A673 (cell line): ENCODE measurements at regions of chr21 and their contacts with region 1.

Region 1: GRCh38 chr21:28745131-28746016 is 247.3 kb downstream of the LTN1 start:
- DNase-seq: peak; percentile 80
- H3K4me3 ChIP-seq: peak overlapping the region; percentile 41
- H3K27ac ChIP-seq: no peak overlapping the region
- H3K4me1 ChIP-seq: no peaks in the 10 kb centered on the region
- H3K27me3 ChIP-seq: no peaks in the 10 kb centered on the region
- CTCF ChIP-seq: peak; percentile 88

Region 2: DNA sequence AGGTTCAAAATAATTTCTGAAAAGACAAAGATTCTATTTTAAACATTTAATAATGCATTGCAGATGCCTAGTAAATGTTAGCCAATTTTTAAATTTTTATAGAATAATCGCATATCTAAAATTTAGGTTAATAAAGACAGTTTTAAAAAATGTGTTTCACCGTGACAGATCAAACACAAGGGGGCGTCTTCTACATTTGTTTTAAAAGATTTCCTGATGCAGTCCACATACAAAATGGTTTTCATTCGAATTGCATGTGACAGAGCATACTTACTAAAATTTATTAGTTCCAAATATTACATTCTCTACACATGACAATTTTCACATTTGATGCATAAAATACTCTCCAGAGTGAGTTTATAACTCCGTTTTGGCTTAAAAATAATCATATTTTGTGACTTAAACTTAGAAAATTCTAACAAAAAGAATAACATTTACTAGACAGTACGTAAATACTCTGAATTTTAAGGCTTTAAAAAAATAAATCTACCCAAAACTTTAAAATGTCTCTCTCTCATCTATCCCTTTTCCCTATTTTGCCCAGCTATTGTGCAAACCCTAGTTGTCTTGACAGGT is 1975.7 kb before region 1 on chr21:
- CTCF ChIA-PET with region 1: no interaction called
- POLR2A ChIA-PET with region 1: no interaction called
- intact Hi-C with region 1: loop called (anchors 10 kb)
- DNase-seq: peak; percentile 57
- H3K4me3 ChIP-seq: no peak overlapping the region
- H3K27ac ChIP-seq: no peak overlapping the region
- H3K4me1 ChIP-seq: no peaks in the 10 kb centered on the region
- H3K27me3 ChIP-seq: no peaks in the 10 kb centered on the region
- CTCF ChIP-seq: peak; percentile 76

Region 3: DNA sequence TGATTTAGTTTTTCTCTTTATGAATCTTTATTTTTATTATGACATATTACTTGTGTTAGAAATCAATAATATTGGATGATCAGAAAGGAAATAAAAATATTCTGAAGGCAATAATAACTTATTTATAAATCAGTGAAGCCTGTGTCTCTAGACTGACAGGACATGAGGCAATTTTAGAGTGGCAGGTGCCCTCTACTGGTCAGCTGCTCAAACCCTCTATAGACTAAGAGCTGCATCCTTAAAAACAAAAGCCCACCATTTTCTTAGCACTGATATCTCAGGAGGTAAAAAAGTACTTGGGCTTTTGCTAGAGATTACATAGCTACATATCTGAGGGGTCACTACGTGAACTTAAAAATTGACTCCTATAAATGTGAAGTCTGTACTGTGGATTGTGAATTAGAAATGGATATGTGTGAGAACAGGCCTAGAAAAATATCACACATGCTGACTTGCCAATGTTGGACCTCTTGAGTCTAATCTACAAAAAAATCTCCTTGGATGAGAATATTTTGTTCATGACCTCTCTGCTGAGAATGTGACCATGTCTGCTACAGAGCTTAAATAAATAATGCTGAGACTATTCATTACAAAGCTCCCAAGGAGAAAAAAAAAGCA is 1180.6 kb before region 1 on chr21:
- CTCF ChIA-PET with region 1: no interaction called
- POLR2A ChIA-PET with region 1: no interaction called
- intact Hi-C with region 1: loop called (anchors 10 kb)
- DNase-seq: peak; percentile 24
- H3K4me3 ChIP-seq: no peak overlapping the region
- H3K27ac ChIP-seq: no peak overlapping the region
- H3K4me1 ChIP-seq: no peaks in the 10 kb centered on the region
- H3K27me3 ChIP-seq: no peaks in the 10 kb centered on the region
- CTCF ChIP-seq: peak; percentile 66

Region 4: GRCh38 chr21:28336314-28336713 is 409.1 kb before region 1 on chr21:
- CTCF ChIA-PET with region 1: interaction called, 9 read pairs
- POLR2A ChIA-PET with region 1: no interaction called
- intact Hi-C with region 1: loop called (anchors 2 kb)
- DNase-seq: peak; percentile 47
- H3K4me3 ChIP-seq: no peak overlapping the region
- H3K27ac ChIP-seq: no peak overlapping the region
- H3K4me1 ChIP-seq: peaks cover 3% of the 10 kb centered on the region
- H3K27me3 ChIP-seq: no peaks in the 10 kb centered on the region
- CTCF ChIP-seq: peak; percentile 57

Region 5: DNA sequence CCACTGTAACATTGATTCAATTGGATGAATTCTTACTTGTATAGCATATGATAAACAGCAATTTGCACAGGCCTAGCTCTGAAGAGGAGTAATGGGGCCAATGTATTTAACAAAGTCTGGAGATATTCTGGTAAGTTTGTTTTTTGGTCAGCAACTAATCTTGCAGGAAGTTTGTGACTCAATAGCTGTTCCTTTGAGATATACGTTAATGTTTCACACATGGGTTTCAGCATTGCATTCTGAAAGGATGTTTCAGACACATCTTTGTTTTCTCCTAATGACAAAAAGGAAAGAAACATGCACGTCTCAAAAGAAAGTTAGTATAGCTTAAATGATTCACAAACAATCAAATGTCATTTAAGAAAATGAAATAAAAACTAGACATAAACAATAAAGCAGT is 198.3 kb after region 1 on chr21:
- CTCF ChIA-PET with region 1: no interaction called
- POLR2A ChIA-PET with region 1: no interaction called
- intact Hi-C with region 1: loop called (anchors 2 kb)
- DNase-seq: no peak
- H3K4me3 ChIP-seq: no peak overlapping the region
- H3K27ac ChIP-seq: no peak overlapping the region
- H3K4me1 ChIP-seq: no peaks in the 10 kb centered on the region
- H3K27me3 ChIP-seq: no peaks in the 10 kb centered on the region
- CTCF ChIP-seq: no peak